GM18951 (cell line): ENCODE measurements at regions of chr1 and their contacts with region 1.

Region 1: GRCh38 chr1:38818175-38818976 is 41.2 kb downstream of the RRAGC start:
- POLR2A ChIP-seq: no peak

Region 2: GRCh38 chr1:38026592-38027200 is 791.7 kb before region 1 on chr1:
- in situ Hi-C with region 1: loop called (anchors 10 kb)
- POLR2A ChIP-seq: no peak

Region 3: DNA sequence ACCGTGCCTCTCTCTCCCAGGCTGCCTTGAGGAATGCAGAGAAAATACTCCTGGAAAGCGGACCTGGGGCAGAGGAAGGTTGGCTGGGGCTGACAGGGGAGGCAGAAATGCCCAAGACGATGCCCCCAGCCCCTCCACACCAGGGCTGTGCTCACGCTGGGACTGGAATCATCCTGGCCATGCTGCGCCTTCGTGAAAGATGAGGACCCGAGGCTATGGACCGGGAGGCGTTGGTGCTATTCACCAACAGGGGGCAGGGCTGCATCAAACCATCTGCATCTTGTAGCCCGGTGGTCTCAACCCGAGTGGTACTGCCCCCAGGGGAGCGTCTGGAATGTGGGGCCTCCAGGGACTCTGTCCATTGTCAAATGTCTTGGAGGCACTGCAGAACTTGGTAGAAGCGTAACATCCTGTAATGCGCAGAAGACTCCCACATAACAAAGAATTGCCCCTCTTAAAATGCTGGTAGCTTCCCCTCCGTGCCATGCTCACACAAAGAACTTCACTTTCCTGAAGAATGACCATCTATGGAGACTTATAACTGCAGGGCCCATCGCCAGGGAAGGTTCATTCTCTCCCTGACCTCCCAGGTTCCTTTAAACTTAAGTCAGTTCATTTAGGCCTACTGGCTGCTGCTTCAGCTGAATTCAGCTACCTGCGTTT is 210.0 kb before region 1 on chr1:
- in situ Hi-C with region 1: loop called (anchors 25 kb)
- POLR2A ChIP-seq: no peak